ENCODE measurements at regions of chr11 and their contacts with region 1.

Region 1: DNA sequence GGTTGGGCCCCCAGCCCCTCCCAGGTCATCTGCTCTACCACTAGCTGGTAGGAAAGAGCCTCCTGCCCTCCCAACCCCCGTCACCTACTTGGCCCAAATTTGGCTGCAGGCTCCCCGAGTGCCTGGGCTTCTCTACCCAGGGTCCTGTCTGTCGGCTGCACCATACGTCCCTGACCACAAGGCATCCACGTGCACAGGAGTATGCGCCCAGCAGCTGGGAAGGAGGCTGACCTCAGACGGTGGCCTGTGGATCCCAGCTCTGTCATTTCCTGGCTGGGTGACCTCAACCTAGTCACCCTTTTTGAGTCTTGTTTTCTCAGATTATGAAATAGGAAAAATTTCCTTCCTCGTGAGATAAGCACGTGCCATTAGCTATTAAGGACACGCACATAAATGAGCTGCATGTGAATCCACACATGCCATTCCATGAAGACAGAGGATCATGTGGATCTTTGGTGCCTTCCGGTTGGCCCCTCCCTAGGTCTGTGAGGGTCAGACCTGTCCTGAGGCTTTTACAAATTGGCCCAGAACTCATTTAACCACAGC is 13.7 kb downstream of the CYB561A3 start:
- DNase-seq: no peak
- H3K4me3 ChIP-seq: no peak overlapping the region
- H3K27ac ChIP-seq: no peak overlapping the region
- H3K4me1 ChIP-seq: peaks cover 14% of the 10 kb centered on the region
- H3K27me3 ChIP-seq: no peaks in the 10 kb centered on the region
- CTCF ChIP-seq: no peak

Region 2: DNA sequence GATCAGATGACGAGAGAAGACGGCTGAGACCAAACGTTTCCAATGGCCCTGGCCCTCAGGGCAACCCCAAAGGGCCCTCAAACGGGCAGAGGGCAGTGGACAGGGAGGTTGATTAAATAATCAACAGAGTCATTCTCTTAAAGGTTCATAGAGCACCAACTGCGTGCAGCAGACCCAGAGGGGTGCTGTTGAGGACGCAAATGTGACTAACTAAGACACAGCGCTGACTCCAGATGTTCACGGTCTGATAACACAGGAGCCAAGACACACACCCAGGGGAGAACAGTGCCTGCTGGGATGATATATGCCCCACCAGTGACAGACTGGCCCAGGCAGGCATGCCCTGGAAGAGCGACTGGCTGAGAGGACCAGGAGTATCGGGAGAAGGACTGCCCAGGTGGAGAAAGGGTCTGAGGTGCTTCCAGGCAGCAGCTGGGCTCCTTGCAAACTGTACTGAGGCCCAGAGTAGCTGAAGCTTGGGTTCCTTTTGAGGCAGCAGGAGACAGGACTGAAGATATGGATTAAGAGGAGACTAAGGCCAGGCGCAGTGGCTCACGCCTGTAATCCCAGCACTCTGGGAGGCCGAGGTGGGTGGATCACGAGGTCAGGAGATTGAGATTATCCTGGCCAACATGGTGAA is 60.5 kb before region 1 on chr11:
- CTCF ChIA-PET with region 1: no interaction called
- dilution Hi-C with region 1: loop called (anchors 5 kb)
- in situ Hi-C with region 1: no loop called
- intact Hi-C with region 1: no loop called
- DNase-seq: no peak
- H3K4me3 ChIP-seq: no peak overlapping the region
- H3K27ac ChIP-seq: no peak overlapping the region
- H3K4me1 ChIP-seq: no peaks in the 10 kb centered on the region
- H3K27me3 ChIP-seq: no peaks in the 10 kb centered on the region
- CTCF ChIP-seq: no peak